Endothelial cell of umbilical vein (primary cell): ENCODE measurements at regions of chr2 and their contacts with region 1.

Region 1: DNA sequence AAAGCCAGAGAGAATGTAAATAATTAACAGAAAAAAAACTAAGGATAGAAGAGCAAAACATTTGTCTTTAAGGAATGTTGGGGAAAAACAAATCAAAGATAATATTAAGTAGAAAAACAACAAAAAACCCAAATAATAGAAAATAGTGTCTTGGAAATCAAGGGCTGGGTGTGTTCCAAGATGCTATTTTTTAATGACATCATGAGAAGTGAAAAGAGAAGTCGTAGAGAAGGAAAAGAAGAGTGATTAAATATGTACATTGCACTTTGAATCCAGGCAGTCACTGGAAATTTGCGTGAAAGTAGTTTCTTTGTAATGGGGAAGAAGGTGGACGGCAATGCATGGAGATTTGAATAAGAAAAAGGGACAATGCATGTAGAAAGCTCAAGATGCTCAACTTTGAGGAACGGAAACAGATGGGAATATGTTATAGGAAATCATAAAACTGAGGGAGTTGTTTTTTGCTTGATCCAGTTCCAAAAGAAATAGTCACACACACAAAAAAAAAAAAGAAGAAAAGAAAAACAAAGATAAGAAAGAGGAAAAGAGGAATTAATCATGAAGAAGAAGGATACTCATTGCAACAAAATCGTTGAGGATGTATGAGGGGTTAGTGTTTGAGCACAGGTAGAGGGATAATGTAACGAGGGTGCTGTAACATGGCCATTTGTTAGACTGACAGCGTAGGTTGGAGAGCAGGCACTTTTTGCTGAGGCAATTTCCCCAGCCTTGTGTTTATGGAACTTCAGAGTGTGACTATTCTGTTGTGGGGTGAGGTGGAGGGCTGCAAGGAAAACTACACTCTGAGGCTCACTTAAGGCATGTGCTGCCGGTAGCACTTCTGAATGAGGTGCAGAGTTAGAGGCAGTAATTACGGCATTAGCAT is 184.1 kb downstream of the CALCRL start:
- DNase-seq: peak; percentile 94
- H3K4me3 ChIP-seq: peak overlapping the region in 2 of 3 experiments; percentile 9 to 45
- H3K27ac ChIP-seq: peak overlapping the region; percentile 96
- H3K4me1 ChIP-seq: peaks cover 36% of the 10 kb centered on the region
- H3K27me3 ChIP-seq: no peaks in the 10 kb centered on the region
- CTCF ChIP-seq: no peak
- POLR2A ChIP-seq: peak; percentile 92

Region 2: DNA sequence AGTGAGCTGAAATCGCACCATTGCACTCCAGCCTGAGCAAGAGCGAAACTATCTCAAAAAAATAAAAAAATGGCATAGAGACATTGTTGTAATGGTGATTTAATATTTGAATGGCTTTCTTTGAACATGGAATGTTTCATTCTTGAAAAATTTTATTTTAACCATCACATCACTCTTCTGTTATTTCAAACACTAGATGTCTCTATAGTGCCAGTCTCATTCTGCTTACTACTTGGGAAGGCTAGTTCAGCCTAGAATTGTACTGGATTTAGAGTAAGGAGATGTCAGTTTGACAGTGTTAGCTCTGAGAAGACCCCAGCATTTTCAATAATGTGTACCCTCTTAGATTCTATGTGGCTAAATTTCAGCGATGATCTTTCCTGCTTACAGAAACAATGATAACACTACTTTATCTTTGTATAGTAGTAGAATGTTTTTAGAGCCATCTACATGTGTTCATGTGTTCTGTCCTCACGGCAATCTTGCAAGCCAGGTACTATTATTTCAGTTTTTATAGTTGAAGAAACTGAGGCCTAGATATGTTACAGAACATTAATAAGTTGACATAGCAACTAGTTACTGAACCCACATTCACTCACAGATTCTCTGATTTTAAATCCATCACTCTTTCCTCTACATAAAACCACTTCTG is 272.0 kb before region 1 on chr2:
- CTCF ChIA-PET with region 1: interaction called, 4 read pairs
- POLR2A ChIA-PET with region 1: no interaction called
- dilution Hi-C with region 1: no loop called
- intact Hi-C with region 1: loop called (anchors 2 kb)
- DNase-seq: peak; percentile 74
- H3K4me3 ChIP-seq: no peak overlapping the region
- H3K27ac ChIP-seq: no peak overlapping the region
- H3K4me1 ChIP-seq: peaks cover 25% of the 10 kb centered on the region
- H3K27me3 ChIP-seq: no peaks in the 10 kb centered on the region
- CTCF ChIP-seq: peak; percentile 0 to 9
- POLR2A ChIP-seq: no peak

Region 3: DNA sequence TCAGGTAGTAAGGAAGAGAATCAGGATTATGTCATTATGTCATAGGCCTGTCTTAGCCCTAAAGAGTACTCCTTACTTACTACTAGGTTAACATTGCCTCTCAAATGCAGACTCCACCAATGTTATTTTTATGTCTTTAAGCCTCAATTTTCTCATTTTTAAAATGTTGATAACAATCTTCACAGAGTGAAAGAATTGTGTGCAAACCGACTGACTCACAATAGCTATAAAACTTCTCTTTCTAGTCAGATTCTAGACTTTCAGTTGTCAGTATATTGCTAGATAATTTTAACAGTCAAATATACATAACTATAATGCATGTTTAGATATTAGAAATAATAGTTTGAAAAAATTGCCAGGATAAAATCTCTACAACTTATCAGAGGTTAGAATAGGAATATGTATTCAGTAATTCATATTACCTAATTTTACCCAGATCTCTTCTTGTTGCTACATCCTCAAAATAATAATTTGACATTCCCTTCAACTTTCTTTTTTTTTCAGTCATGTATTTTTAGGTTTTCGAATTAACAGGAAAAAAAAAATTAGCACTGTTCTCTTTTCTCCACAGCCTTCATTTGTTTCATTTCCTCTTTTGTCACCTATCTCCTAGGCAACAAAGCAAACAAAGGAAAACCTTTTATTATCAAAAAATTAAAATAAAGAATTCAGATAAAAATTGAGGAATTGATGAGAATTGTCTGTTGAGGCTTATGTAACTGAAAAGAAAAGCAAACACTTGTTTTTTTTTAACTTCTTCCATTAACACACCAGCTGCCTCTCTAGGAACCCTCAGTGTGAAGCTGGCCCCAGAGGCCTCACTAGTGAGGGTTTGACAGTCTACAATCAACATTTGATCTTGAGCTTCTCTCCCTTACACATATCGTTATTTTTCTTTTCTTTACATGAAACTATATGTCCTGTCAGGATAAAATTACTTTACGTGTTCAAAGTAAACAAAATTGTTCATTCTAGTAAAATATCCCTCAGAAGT is 94.9 kb before region 1 on chr2:
- CTCF ChIA-PET with region 1: interaction called, 3 read pairs
- POLR2A ChIA-PET with region 1: no interaction called
- dilution Hi-C with region 1: no loop called
- intact Hi-C with region 1: loop called (anchors 1 kb)
- DNase-seq: peak; percentile 75
- H3K4me3 ChIP-seq: no peak overlapping the region
- H3K27ac ChIP-seq: peak overlapping the region; percentile 58
- H3K4me1 ChIP-seq: peaks cover 11% of the 10 kb centered on the region
- H3K27me3 ChIP-seq: no peaks in the 10 kb centered on the region
- CTCF ChIP-seq: no peak
- POLR2A ChIP-seq: no peak

Region 4: GRCh38 chr2:187299122-187299906 is 35.4 kb after region 1 on chr2:
- CTCF ChIA-PET with region 1: no interaction called
- POLR2A ChIA-PET with region 1: interaction called, 3 read pairs
- dilution Hi-C with region 1: no loop called
- intact Hi-C with region 1: loop called (anchors 1 kb)
- DNase-seq: peak; percentile 75
- H3K4me3 ChIP-seq: no peak overlapping the region
- H3K27ac ChIP-seq: peak overlapping the region; percentile 70
- H3K4me1 ChIP-seq: peaks cover 40% of the 10 kb centered on the region
- H3K27me3 ChIP-seq: no peaks in the 10 kb centered on the region
- CTCF ChIP-seq: peak; percentile 40 to 47
- POLR2A ChIP-seq: no peak

Region 5: GRCh38 chr2:187329586-187329985 is 65.7 kb after region 1 on chr2:
- CTCF ChIA-PET with region 1: no interaction called
- POLR2A ChIA-PET with region 1: no interaction called
- dilution Hi-C with region 1: no loop called
- intact Hi-C with region 1: no loop called
- DNase-seq: peak; percentile 42
- H3K4me3 ChIP-seq: no peak overlapping the region
- H3K27ac ChIP-seq: no peak overlapping the region
- H3K4me1 ChIP-seq: no peaks in the 10 kb centered on the region
- H3K27me3 ChIP-seq: no peaks in the 10 kb centered on the region
- CTCF ChIP-seq: no peak
- POLR2A ChIP-seq: no peak

Region 6: DNA sequence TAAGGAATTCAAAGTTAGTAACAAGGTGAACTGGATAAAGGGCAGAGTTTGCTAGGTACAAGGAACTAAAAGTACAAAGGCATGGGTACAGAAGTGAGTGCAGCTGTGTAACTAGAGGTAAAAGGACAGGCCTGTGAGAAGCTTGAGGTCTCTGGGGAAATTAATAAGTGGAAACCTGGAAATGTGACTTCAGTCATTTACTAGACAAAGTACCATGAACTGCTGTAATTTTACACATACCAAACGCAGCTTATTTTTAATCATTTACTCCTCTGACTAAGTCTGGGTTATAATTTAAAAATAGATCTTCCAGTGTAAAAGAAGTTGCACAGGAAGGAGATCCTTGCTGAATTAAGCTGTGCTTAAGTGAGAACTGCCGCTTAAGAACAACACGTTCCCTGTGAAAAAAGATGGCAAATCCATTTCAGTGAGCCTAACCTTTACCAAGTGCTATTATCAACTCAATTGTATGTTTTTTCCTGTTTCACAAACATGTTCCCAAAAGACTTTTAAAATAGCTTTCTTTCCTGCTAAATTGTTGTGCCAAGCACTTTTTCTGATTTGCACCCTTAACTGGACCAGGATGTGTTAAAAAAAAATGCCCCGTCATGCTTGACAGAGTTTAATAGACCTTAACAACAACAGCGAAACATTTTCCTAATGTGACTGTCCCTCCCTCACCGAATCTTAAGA is 139.8 kb after region 1 on chr2:
- CTCF ChIA-PET with region 1: interaction called, 3 read pairs
- POLR2A ChIA-PET with region 1: no interaction called
- dilution Hi-C with region 1: no loop called
- intact Hi-C with region 1: loop called (anchors 1 kb)
- DNase-seq: peak; percentile 92
- H3K4me3 ChIP-seq: peak overlapping the region in 1 of 3 experiments; percentile 31
- H3K27ac ChIP-seq: peak overlapping the region; percentile 83
- H3K4me1 ChIP-seq: peaks cover 67% of the 10 kb centered on the region
- H3K27me3 ChIP-seq: no peaks in the 10 kb centered on the region
- CTCF ChIP-seq: no peak
- POLR2A ChIP-seq: peak; percentile 46

Region 7: GRCh38 chr2:187453078-187453641 is 189.2 kb after region 1 on chr2:
- CTCF ChIA-PET with region 1: no interaction called
- POLR2A ChIA-PET with region 1: interaction called, 7 read pairs
- dilution Hi-C with region 1: no loop called
- intact Hi-C with region 1: loop called (anchors 1 kb)
- DNase-seq: peak; percentile 68
- H3K4me3 ChIP-seq: no peak overlapping the region
- H3K27ac ChIP-seq: no peak overlapping the region
- H3K4me1 ChIP-seq: peaks cover 6% of the 10 kb centered on the region
- H3K27me3 ChIP-seq: no peaks in the 10 kb centered on the region
- CTCF ChIP-seq: peak; percentile 10 to 12
- POLR2A ChIP-seq: no peak

Region 8: DNA sequence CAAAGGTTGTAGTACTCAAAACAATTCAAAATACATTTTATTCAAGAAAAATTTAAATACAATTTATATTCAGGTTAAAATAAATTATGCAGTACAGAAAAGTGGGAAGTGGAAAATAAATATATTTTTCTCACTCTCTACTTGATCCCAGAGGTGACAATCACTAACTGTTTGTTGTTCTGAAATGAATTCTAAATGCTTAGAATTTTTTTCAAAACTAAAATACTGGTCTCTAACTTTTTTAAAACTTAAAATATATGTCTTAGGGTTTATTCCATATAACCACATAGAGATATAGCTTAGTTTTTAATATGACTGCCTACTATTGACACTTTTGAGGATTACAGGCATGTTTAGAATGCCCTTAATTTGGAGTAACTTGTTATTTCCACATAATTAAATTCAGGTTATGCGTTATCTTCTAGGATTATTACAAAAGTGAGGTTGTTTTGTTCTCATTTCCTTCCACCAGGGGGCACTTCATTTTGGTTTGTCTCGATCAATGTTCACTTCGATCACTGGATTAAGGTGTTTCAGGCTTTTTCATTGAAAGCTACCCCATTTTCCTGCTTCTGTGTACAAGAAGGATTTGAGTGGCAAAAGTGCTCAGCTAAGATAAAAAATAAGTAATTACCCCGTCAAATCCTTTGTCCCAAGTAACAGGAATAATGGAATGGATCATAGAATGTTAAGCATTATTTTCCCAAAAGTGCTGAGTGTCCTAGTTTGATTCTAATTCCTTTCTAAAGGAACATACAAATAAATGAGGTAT is 317.4 kb after region 1 on chr2:
- CTCF ChIA-PET with region 1: no interaction called
- POLR2A ChIA-PET with region 1: no interaction called
- dilution Hi-C with region 1: no loop called
- intact Hi-C with region 1: loop called (anchors 1 kb)
- DNase-seq: peak; percentile 67
- H3K4me3 ChIP-seq: peak overlapping the region in 1 of 3 experiments; percentile 34
- H3K27ac ChIP-seq: peak overlapping the region; percentile 78
- H3K4me1 ChIP-seq: peaks cover 23% of the 10 kb centered on the region
- H3K27me3 ChIP-seq: no peaks in the 10 kb centered on the region
- CTCF ChIP-seq: peak; percentile 45 to 46
- POLR2A ChIP-seq: no peak

Region 9: GRCh38 chr2:187627153-187627552 is 363.2 kb after region 1 on chr2:
- CTCF ChIA-PET with region 1: no interaction called
- POLR2A ChIA-PET with region 1: no interaction called
- dilution Hi-C with region 1: no loop called
- intact Hi-C with region 1: no loop called
- DNase-seq: no peak
- H3K4me3 ChIP-seq: no peak overlapping the region
- H3K27ac ChIP-seq: no peak overlapping the region
- H3K4me1 ChIP-seq: no peaks in the 10 kb centered on the region
- H3K27me3 ChIP-seq: no peaks in the 10 kb centered on the region
- CTCF ChIP-seq: no peak
- POLR2A ChIP-seq: no peak